PC-9 (cell line): ENCODE measurements at regions of chr2 and their contacts with region 1.

Region 1: GRCh38 chr2:98909317-98910211 is 26.5 kb downstream of the CRACDL start:
- DNase-seq: peak; percentile 91 to 92
- H3K4me3 ChIP-seq: no peak overlapping the region
- H3K27ac ChIP-seq: no peak overlapping the region
- H3K4me1 ChIP-seq: peaks cover 17% of the 10 kb centered on the region
- H3K27me3 ChIP-seq: no peaks in the 10 kb centered on the region
- CTCF ChIP-seq: no peak

Region 2: GRCh38 chr2:98819231-98819766 is 90.3 kb before region 1 on chr2:
- CTCF ChIA-PET with region 1: no interaction called
- POLR2A ChIA-PET with region 1: no interaction called
- intact Hi-C with region 1: no loop called
- DNase-seq: no peak
- H3K4me3 ChIP-seq: no peak overlapping the region
- H3K27ac ChIP-seq: no peak overlapping the region
- H3K4me1 ChIP-seq: peaks cover 13% of the 10 kb centered on the region
- H3K27me3 ChIP-seq: no peaks in the 10 kb centered on the region
- CTCF ChIP-seq: no peak

Region 3: DNA sequence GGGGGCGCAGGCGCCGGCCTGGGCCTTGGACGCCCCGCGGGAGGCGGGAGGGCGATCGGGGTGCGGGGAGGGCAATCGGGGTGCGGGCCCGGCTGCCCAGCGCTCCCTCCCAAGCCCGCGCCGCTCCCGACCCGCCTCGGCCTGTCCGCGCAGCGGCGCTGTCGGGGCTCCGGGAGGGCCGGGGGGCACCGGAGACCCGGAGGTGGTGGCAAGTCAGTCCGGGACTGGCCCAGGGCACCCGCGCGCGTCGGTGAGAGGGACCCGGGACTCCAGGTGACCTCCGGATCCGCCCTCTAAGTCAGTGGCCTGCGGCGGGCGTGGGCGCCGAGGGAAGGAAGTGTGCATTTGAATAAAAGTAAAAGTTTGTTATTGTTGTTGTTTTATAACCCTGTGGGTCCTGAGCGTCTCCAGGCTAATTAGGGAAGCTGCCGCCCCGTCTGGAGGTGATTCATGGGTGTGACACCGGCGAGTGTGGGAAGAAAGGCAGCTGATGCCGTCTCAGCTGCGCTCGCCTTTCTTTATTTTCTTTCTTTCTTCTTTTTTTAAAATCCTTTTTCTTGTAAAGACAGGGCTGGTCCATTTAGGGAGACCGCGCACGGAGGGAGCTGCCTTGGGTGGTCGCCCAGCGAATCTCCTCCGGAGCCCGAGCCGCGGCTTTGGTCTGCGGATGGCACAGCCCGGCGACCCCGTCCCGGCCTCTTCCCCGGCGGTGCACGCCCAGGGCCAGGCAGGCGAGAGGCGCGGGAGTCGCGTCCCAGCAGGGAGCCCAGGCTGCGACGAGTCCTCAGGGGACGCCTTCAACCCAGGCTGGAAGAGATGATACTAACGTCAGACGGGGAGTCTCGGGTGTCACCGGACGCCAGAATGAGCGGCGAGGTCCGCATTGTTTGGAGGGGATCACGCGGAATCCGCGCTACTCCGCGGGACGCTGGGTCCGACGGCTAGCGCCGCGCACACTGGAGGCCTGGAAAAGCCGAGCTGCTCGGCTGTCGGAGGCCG is 27.1 kb after region 1 on chr2:
- CTCF ChIA-PET with region 1: no interaction called
- POLR2A ChIA-PET with region 1: interaction called, 3 read pairs
- intact Hi-C with region 1: loop called (anchors 2 kb)
- DNase-seq: no peak
- H3K4me3 ChIP-seq: peak overlapping the region; percentile 54; the same call in 1 of the 2 replicates
- H3K27ac ChIP-seq: no peak overlapping the region
- H3K4me1 ChIP-seq: no peaks in the 10 kb centered on the region
- H3K27me3 ChIP-seq: peaks cover 47% of the 10 kb centered on the region
- CTCF ChIP-seq: no peak